Activated T-helper 1 cell treated with anti-CD3 and anti-CD28 coated beads, Interleukin-12 subunit alpha, Interleukin-12 subunit beta, Interleukin-2, Interleukin-4 antibody, amounts not matched to agents 30 ng/mL and 10 ng/mL and 1 ng/mL, durations not matched to agents 14 hours and 24 hours and 36 hours (primary cell): ENCODE measurements at regions of chr5 and their contacts with region 1.

Region 1: DNA sequence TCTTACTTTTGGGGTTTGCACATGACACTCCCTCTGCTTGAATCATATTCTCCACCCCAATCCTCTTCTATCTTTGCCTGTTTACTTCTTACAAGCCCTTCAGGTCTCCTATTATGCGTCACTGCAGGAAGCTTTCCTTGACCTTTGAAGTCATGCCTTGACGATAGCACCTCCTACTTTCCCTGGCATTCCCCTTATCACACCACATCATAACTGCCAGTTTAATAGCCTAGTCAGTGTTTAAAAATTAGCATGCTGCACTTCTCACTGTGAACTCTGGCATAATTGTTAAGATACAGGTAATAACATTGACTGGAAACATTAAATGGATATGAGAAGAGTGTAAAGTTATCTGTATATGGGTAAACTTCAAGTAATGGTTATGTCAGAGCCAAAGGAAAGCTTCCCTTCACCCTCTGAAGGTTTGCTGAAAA is 37.1 kb upstream of the CEP120 start:
- DNase-seq: no peak
- H3K4me3 Mint-ChIP-seq: peak overlapping the region; percentile 1
- H3K27ac Mint-ChIP-seq: peak overlapping the region; percentile 85
- H3K4me1 Mint-ChIP-seq: peaks cover 11% of the 10 kb centered on the region
- H3K27me3 Mint-ChIP-seq: no peaks in the 10 kb centered on the region

Region 2: GRCh38 chr5:122332589-122333555 is 1127.4 kb before region 1 on chr5:
- intact Hi-C with region 1: no loop called
- DNase-seq: no peak
- H3K4me3 Mint-ChIP-seq: no peak overlapping the region
- H3K27ac Mint-ChIP-seq: no peak overlapping the region
- H3K4me1 Mint-ChIP-seq: no peaks in the 10 kb centered on the region
- H3K27me3 Mint-ChIP-seq: no peaks in the 10 kb centered on the region

Region 3: GRCh38 chr5:123438902-123439301 is 21.4 kb before region 1 on chr5:
- intact Hi-C with region 1: loop called (anchors 1 kb)
- DNase-seq: peak; percentile 29
- H3K4me3 Mint-ChIP-seq: peak overlapping the region; percentile 27
- H3K27ac Mint-ChIP-seq: peak overlapping the region; percentile 74
- H3K4me1 Mint-ChIP-seq: peaks cover 36% of the 10 kb centered on the region
- H3K27me3 Mint-ChIP-seq: no peaks in the 10 kb centered on the region

Region 4: GRCh38 chr5:123448017-123448617 is 12.2 kb before region 1 on chr5:
- intact Hi-C with region 1: loop called (anchors 1 kb)
- DNase-seq: peak; percentile 37
- H3K4me3 Mint-ChIP-seq: peak overlapping the region; percentile 9
- H3K27ac Mint-ChIP-seq: peak overlapping the region; percentile 86
- H3K4me1 Mint-ChIP-seq: peaks cover 36% of the 10 kb centered on the region
- H3K27me3 Mint-ChIP-seq: peaks cover 9% of the 10 kb centered on the region

Region 5: DNA sequence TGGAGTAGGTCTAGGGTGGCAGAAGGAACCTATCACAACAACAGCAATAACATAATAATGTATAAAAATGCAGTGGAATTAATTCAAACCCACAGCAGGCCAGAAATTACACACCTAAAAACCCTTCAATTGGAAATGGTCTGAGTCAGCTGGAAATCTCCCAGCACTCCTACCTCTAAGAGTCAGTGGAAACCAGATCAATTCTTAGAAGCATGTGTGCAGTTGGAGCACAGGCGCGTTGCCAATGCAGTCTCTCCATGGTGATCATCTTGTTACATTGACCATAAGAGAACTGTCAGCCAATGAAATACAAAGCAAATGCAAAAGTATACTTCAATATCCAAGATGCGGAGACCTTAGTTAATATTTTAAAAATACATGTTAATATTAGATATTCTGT is 36.6 kb after region 1 on chr5:
- intact Hi-C with region 1: no loop called
- DNase-seq: no peak
- H3K4me3 Mint-ChIP-seq: no peak overlapping the region
- H3K27ac Mint-ChIP-seq: no peak overlapping the region
- H3K4me1 Mint-ChIP-seq: no peaks in the 10 kb centered on the region
- H3K27me3 Mint-ChIP-seq: peaks cover 16% of the 10 kb centered on the region

Region 6: DNA sequence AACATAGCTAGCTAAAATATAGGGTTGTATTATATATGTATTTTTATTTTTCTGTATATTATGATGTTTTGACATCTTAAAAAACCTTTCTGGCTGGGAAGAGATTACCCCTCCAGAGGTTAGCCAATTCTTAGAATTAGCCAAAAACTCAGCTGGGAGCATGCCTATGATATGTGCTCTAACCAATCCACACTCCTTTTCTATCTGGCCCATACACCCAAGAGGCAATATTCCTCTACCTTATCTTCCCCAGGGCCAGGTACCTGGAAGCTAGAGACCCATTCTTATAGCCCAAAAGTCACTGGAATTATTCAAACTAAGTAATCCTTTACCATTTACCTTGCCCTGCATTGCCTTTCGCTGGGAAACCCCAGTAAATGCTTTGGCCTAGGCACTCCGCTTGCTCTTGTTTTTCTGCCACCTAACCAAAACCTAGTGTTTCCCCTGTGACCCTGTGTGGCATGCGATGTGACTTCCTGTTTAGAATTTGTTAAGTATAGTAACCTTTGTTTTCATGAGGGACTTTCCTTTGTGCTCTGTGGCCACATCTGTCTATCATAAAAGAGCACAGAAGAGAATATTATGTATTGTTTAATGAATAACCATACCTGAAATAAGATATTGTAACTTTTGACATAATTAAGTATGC is 89.1 kb after region 1 on chr5:
- intact Hi-C with region 1: loop called (anchors 1 kb)
- DNase-seq: peak; percentile 70
- H3K4me3 Mint-ChIP-seq: peak overlapping the region; percentile 1
- H3K27ac Mint-ChIP-seq: peak overlapping the region; percentile 91
- H3K4me1 Mint-ChIP-seq: peaks cover 38% of the 10 kb centered on the region
- H3K27me3 Mint-ChIP-seq: no peaks in the 10 kb centered on the region